Activated CD4-positive, alpha-beta memory T cell treated with anti-CD3 and anti-CD28 coated beads for 36 hours (primary cell): ENCODE measurements at regions of chr15 and their contacts with region 1.

Region 1: DNA sequence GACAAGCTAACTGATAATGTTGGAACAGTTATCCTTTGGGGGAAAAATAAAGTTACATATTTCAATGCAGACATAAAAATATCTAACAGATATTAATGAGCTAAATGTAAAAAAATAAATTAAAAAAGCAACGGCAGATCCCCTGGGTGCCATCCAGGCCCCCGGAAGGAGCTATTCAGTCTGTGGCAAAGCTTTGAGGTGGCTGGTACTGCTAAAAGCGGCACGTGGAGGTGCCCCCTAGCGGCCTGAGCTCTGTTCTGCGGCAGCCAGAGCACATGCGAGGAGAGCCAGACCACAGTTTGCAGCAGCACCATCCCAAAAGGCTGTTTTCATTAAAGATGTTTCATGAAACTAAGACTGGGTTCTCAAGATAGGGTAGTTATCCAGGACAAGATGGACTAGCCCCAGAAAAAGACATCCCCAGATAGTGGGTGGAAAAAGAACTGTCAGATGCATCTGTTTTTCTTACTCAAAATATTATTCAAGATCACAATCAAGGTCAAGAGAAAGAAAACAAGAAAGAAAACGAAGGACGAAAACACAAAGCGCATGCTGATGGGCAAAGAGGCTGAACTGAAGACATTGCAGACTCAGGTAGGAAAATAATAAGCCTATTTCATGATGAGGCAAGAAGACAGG is 18.7 kb downstream of the AP3S2 start:
- DNase-seq: peak; percentile 89
- H3K4me3 Mint-ChIP-seq: no peak overlapping the region
- H3K27ac Mint-ChIP-seq: no peak overlapping the region
- H3K4me1 Mint-ChIP-seq: peaks cover 4% of the 10 kb centered on the region
- H3K27me3 Mint-ChIP-seq: no peaks in the 10 kb centered on the region

Region 2: DNA sequence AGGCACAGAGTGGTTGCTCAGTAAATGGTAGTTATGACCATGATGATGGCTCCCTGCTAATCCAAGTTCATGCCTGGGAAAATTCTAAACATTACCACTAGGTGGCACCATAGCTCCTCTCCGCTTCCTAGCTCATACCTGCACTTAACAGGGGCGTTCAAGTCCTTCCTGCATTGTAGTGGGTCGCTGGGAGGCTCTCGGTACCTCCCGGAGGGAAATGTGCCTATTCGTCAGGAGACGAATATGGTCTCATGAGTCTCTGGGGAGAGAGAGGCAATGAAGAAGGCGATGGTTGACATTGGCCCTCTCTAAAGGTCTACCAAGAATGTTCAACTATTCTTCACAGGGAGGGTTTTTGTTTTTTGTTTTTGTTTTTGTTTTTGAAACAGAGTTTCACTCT is 134.9 kb before region 1 on chr15:
- CTCF ChIA-PET with region 1: interaction called, 50 read pairs
- POLR2A ChIA-PET with region 1: no interaction called
- intact Hi-C with region 1: loop called (anchors 2 kb)
- DNase-seq: peak; percentile 61
- H3K4me3 Mint-ChIP-seq: no peak overlapping the region
- H3K27ac Mint-ChIP-seq: no peak overlapping the region
- H3K4me1 Mint-ChIP-seq: peaks cover 2% of the 10 kb centered on the region
- H3K27me3 Mint-ChIP-seq: peaks cover 2% of the 10 kb centered on the region

Region 3: DNA sequence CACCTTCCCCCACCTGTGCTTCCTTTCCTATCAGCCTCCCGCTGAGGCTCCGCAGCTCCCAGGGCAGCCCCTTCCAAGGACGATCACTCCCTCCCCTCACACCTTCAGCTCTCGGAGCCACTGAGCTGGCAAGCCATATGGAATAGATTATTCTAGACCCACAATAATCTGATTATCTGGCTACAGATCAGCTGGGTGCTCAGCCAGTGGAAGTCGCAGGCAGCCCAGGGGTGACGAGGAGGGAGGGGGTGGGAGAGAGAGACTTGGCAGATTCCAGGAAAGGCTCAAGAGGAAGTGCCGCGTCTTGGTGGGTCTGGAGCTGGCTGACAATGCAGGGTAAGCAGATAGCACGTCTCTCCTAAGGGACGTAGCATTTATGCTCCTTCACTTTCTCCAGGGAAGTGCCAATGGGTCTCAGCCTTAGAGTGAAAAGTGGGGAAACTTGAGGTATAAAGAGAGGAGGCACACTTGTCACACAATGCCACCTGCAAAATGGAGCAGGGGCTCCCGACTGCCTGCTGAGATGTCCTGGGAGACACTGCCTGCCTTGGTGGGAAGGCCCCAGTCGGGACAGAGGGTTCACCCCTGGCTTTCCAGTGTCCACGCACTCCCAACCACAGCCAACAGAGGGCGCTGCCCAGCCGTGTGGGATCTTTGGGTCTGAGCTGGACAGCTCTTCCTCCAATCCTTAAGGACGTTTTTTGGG is 114.6 kb before region 1 on chr15:
- CTCF ChIA-PET with region 1: interaction called, 163 read pairs
- POLR2A ChIA-PET with region 1: no interaction called
- intact Hi-C with region 1: loop called (anchors 1 kb)
- DNase-seq: peak; percentile 86
- H3K4me3 Mint-ChIP-seq: no peak overlapping the region
- H3K27ac Mint-ChIP-seq: no peak overlapping the region
- H3K4me1 Mint-ChIP-seq: no peaks in the 10 kb centered on the region
- H3K27me3 Mint-ChIP-seq: peaks cover 5% of the 10 kb centered on the region

Region 4: GRCh38 chr15:89836255-89837133 is 38.6 kb before region 1 on chr15:
- CTCF ChIA-PET with region 1: interaction called, 12 read pairs
- POLR2A ChIA-PET with region 1: no interaction called
- intact Hi-C with region 1: no loop called
- DNase-seq: no peak
- H3K4me3 Mint-ChIP-seq: no peak overlapping the region
- H3K27ac Mint-ChIP-seq: no peak overlapping the region
- H3K4me1 Mint-ChIP-seq: peaks cover 3% of the 10 kb centered on the region
- H3K27me3 Mint-ChIP-seq: no peaks in the 10 kb centered on the region

Region 5: GRCh38 chr15:89888214-89888804 is 13.3 kb after region 1 on chr15:
- CTCF ChIA-PET with region 1: interaction called, 86 read pairs
- POLR2A ChIA-PET with region 1: interaction called, 4 read pairs
- intact Hi-C with region 1: no loop called
- DNase-seq: no peak
- H3K4me3 Mint-ChIP-seq: no peak overlapping the region
- H3K27ac Mint-ChIP-seq: no peak overlapping the region
- H3K4me1 Mint-ChIP-seq: peaks cover 36% of the 10 kb centered on the region
- H3K27me3 Mint-ChIP-seq: no peaks in the 10 kb centered on the region

Region 6: DNA sequence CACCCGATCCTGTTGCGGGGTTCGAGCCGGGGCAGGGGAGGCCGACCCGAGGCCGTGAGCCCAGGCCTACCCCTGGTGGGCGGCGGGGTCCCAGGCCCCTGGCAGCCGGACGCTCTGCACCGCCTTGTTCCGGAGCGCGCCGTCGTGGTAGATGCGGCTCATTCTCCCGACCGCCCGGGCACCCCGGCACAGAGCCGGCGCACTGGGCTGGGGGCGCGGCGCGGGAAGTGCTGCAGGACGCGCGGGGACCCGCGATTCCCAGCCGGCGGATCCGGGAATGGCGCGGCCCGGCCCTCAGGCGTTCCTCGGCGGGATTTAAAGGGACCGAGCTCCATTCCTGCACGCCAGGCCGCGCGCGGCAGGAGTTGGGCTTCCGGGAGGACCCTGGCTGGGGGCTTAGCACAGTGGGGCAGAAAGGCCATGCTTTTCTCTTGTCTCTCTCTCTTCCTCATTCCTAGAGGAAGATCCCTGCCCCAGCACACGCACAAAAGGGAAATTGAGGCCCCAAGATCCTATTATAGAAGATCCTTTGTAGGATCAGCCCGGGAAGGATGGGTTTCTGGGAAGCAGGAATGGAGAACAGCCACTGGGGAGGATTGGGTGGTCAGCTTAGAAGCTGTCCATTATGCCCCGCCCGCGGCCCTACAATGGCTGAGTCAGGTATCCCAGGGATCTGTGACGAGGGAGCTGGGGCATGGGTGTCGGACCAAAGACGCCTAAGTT is 37.8 kb after region 1 on chr15 and contains the start of gene ARPIN:
- CTCF ChIA-PET with region 1: no interaction called
- POLR2A ChIA-PET with region 1: no interaction called
- intact Hi-C with region 1: no loop called
- DNase-seq: no peak
- H3K4me3 Mint-ChIP-seq: peak within 1 kb of the TSS; percentile 20
- H3K27ac Mint-ChIP-seq: no peak within 1 kb of the TSS
- H3K4me1 Mint-ChIP-seq: peaks cover 3% of the 10 kb centered on the region
- H3K27me3 Mint-ChIP-seq: peaks cover 29% of the 10 kb centered on the region
- total RNA-seq, gene ARPIN: 0.05 TPM in 1 of 2 experiments, not detected in the other

Region 7: GRCh38 chr15:90071208-90071807 is 196.3 kb after region 1 on chr15:
- CTCF ChIA-PET with region 1: interaction called, 10 read pairs
- POLR2A ChIA-PET with region 1: no interaction called
- intact Hi-C with region 1: no loop called
- DNase-seq: peak; percentile 84
- H3K4me3 Mint-ChIP-seq: no peak overlapping the region
- H3K27ac Mint-ChIP-seq: no peak overlapping the region
- H3K4me1 Mint-ChIP-seq: peaks cover 21% of the 10 kb centered on the region
- H3K27me3 Mint-ChIP-seq: no peaks in the 10 kb centered on the region